Posterior cingulate gyrus (tissue), 11 donors: ENCODE measurements at regions of chr5 and their contacts with region 1.

Region 1: GRCh38 chr5:77560677-77561263 is 68.7 kb upstream of the WDR41 start:
- DNase-seq: no peak

Region 2: GRCh38 chr5:77046416-77047073 is 514.2 kb before region 1 on chr5:
- intact Hi-C with region 1: no loop called
- DNase-seq: no peak

Region 3: GRCh38 chr5:77486344-77486962 is 74.3 kb before region 1 on chr5:
- intact Hi-C with region 1: no loop called
- DNase-seq: no peak

Region 4: GRCh38 chr5:78008356-78008967 is 447.7 kb after region 1 on chr5:
- intact Hi-C with region 1: loop called (anchors 5 kb)
- DNase-seq: peak in 3 of 10 donors; percentile 41 to 75 (median 59)

Region 5: GRCh38 chr5:78162253-78162862 is 601.6 kb after region 1 on chr5:
- intact Hi-C with region 1: loop called (anchors 10 kb)
- DNase-seq: no peak